PC-9 (cell line): ENCODE measurements at regions of chr21 and their contacts with region 1.

Region 1: GRCh38 chr21:15064576-15065391 is at the start of gene NRIP1:
- DNase-seq: peak; percentile 65 to 84
- H3K4me3 ChIP-seq: peak within 1 kb of the TSS; percentile 86
- H3K27ac ChIP-seq: peak within 1 kb of the TSS; percentile 74
- H3K4me1 ChIP-seq: peaks cover 41% of the 10 kb centered on the region
- H3K27me3 ChIP-seq: no peaks in the 10 kb centered on the region
- CTCF ChIP-seq: no peak
- total RNA-seq, gene NRIP1: 25.2 and 33.0 TPM in 2 replicates

Region 2: DNA sequence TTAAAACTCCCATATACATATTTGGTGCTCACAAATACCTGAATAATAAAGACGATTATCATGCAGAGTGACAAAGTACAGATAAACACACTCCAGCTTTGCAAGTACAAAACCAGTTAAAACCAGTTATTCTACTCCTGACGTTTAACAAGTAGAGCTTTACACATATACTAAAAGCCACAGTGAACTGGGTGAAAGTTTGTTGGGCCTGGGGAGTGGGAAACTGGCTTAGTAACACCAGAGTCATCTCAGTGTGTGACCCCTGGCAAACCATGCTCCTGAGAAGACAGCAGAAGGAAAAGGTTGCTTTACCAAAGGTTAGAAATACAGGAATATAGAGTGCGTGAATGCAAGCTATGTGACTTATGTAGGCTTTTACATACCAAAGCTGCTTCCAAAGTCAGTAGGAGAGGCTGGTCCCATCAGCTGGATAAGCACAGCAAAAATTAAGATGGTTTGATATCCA is 148.1 kb before region 1 on chr21:
- CTCF ChIA-PET with region 1: no interaction called
- POLR2A ChIA-PET with region 1: no interaction called
- intact Hi-C with region 1: loop called (anchors 2 kb)
- DNase-seq: peak; percentile 62 to 93
- H3K4me3 ChIP-seq: peak overlapping the region; percentile 42
- H3K27ac ChIP-seq: peak overlapping the region; percentile 93
- H3K4me1 ChIP-seq: peaks cover 72% of the 10 kb centered on the region
- H3K27me3 ChIP-seq: no peaks in the 10 kb centered on the region
- CTCF ChIP-seq: no peak

Region 3: GRCh38 chr21:14968821-14969220 is 96.0 kb before region 1 on chr21:
- CTCF ChIA-PET with region 1: no interaction called
- POLR2A ChIA-PET with region 1: no interaction called
- intact Hi-C with region 1: no loop called
- DNase-seq: no peak
- H3K4me3 ChIP-seq: no peak overlapping the region
- H3K27ac ChIP-seq: no peak overlapping the region; the same call in 1 of the 2 replicates
- H3K4me1 ChIP-seq: no peaks in the 10 kb centered on the region
- H3K27me3 ChIP-seq: no peaks in the 10 kb centered on the region
- CTCF ChIP-seq: no peak

Region 4: DNA sequence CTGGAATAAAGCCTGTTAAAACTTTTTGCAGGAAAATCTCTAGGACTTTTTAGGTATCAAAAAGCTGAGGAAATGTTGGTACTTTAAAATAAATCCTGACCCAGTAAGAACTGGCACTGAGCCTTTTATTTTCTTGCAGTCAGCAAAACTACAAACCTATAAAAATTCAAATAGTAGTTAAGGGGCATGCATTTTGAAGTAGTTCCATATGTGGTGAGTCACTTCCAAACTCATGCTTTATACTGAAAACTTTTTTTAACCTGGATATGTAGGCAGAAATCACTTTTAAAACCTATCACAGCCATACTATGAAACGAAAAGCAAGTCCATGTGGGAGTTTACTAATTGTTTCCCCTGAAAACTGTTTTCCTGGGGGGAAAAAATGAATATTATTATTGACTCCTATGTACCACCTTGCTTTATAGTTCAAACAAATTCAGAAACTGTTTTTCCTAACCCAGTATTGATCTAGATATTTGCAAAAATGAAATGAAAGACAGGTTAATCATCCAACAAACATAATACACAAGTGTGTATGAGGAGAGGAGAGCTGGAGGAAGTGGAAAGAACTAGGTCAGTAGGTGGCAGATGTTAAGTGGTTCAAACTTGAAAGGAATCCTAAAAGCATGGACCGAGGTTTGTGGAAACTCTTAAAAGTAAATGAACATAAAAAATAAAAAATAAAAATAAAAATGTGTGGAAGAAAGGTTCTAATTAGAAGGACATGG is 30.5 kb before region 1 on chr21:
- CTCF ChIA-PET with region 1: interaction called, 11 read pairs
- POLR2A ChIA-PET with region 1: no interaction called
- intact Hi-C with region 1: no loop called
- DNase-seq: no peak
- H3K4me3 ChIP-seq: no peak overlapping the region
- H3K27ac ChIP-seq: no peak overlapping the region
- H3K4me1 ChIP-seq: no peaks in the 10 kb centered on the region
- H3K27me3 ChIP-seq: no peaks in the 10 kb centered on the region
- CTCF ChIP-seq: no peak

Region 5: GRCh38 chr21:15293240-15293639 is 228.5 kb after region 1 on chr21:
- CTCF ChIA-PET with region 1: no interaction called
- POLR2A ChIA-PET with region 1: no interaction called
- intact Hi-C with region 1: loop called (anchors 5 kb)
- DNase-seq: peak; percentile 43 to 85
- H3K4me3 ChIP-seq: no peak overlapping the region
- H3K27ac ChIP-seq: peak overlapping the region; percentile 56
- H3K4me1 ChIP-seq: peaks cover 30% of the 10 kb centered on the region
- H3K27me3 ChIP-seq: no peaks in the 10 kb centered on the region
- CTCF ChIP-seq: no peak